ENCODE measurements at regions of chr1 and their contacts with region 1.

Region 1: DNA sequence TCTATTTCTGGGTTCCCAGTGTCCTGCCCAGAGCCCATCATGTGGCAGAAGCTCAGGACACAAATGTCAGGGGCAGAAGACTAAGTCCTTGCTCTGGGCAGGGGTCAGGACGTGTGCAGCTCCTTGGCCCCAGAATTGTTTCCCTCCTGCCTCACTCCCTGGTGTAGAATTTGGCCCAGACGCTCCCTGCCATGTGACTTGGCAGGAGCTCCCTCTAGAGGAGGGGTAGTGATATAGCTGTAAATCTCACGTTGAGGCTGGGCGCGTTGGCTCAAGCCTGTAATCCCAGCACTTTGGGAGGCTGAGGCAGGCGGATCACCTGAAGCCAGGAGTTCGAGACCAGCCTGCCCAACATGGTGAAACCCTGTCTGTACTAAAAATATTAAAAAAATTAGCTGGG is 91.2 kb downstream of the UBIAD1 start:
- DNase-seq: peak; percentile 17 to 59
- ATAC-seq: peak; percentile 85 to 94
- H3K4me3 ChIP-seq: no peak overlapping the region
- H3K27ac ChIP-seq: no peak overlapping the region
- H3K4me1 ChIP-seq: no peaks in the 10 kb centered on the region
- H3K27me3 ChIP-seq: no peaks in the 10 kb centered on the region
- CTCF ChIP-seq: peak; percentile 53 to 71 (median 57)
- POLR2A ChIP-seq: no peak

Region 2: GRCh38 chr1:11248155-11248554 is 116.0 kb before region 1 on chr1:
- in situ Hi-C with region 1: no loop called
- intact Hi-C with region 1: loop called (anchors 5 kb)
- DNase-seq: no peak
- ATAC-seq: no peak
- H3K4me3 ChIP-seq: no peak overlapping the region
- H3K27ac ChIP-seq: no peak overlapping the region
- H3K4me1 ChIP-seq: no peaks in the 10 kb centered on the region
- H3K27me3 ChIP-seq: no peaks in the 10 kb centered on the region
- CTCF ChIP-seq: no peak
- POLR2A ChIP-seq: no peak

Region 3: DNA sequence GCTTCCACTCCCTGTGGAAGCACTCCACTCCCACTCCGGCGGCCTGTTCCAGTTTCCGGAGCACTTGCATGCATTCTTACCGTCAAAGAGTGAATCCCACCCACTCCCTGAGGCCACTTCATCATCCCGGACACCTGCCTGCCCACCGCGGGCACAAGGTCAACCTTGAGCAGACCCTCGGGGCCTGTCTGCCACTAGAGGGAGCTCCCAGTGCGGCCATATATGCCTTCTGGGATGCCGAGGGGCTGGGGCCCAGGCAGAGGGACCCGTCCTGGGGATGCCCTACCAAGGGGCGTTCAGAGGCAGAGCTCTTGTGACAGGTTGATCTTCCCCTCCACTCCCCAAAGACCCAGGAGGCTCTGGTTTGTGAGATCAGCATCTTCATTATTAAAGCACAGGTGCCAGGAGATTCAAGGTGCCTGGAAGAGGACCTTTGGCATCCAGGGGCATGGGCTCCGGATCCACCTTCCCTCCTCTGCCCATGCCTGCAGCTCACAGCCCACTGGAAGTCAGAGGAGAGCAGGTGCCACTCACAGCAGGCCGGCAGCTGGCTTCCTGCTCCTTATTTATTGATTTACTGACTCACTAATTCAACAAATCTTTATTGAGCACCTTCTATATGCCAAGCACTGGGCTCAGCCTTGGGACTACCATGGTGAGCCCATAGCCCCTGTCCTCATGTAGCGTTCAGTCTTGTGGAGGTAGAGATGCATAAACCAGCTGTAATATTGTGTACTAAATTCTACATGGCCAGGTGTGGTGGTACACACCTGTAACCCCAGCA is 43.8 kb before region 1 on chr1:
- in situ Hi-C with region 1: no loop called
- intact Hi-C with region 1: loop called (anchors 1 kb)
- DNase-seq: no peak
- ATAC-seq: no peak
- H3K4me3 ChIP-seq: no peak overlapping the region
- H3K27ac ChIP-seq: no peak overlapping the region
- H3K4me1 ChIP-seq: no peaks in the 10 kb centered on the region
- H3K27me3 ChIP-seq: peaks cover 3 to 10% (median 5%) of the 10 kb centered on the region in 3 donors
- CTCF ChIP-seq: peak; percentile 12 to 61 (median 39)
- POLR2A ChIP-seq: no peak

Region 4: DNA sequence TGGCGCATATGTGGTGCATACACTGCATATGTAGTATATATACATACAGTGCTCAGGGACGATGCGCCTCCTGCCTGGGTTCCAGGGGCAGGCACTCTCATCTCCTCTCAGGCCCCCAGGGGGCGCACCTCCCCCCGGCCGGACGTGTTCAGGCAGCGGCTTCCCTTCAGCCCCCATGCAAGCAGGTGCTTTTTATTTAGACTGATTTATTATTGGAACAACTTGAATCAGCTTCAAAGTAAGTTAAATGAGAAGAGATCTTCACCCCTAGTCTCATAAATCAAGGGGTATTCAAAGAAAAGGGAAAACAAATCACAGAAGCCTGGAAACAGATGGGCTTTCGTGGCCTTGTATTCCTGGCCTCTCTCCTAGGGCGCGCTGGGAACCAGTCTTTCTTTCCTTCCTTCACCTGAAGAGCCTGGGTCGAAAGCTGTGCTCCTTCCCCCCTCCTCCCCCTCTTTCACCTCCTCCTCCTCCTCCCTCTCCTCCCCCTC is 26.5 kb before region 1 on chr1:
- in situ Hi-C with region 1: no loop called
- intact Hi-C with region 1: loop called (anchors 1 kb)
- DNase-seq: peak in 1 of 2 donors; percentile 42
- ATAC-seq: no peak
- H3K4me3 ChIP-seq: no peak overlapping the region
- H3K27ac ChIP-seq: no peak overlapping the region
- H3K4me1 ChIP-seq: peaks cover 12 to 33% of the 10 kb centered on the region in 2 donors
- H3K27me3 ChIP-seq: no peaks in the 10 kb centered on the region
- CTCF ChIP-seq: peak; percentile 57 to 80 (median 67)
- POLR2A ChIP-seq: no peak